ENCODE measurements at regions of chr5 and their contacts with region 1.

Region 1: GRCh38 chr5:76384189-76384588 is 18.9 kb upstream of the IQGAP2 start:
- DNase-seq: no peak
- H3K4me3 Mint-ChIP-seq: no peak overlapping the region
- H3K27ac Mint-ChIP-seq: no peak overlapping the region
- H3K4me1 Mint-ChIP-seq: peaks cover 32% of the 10 kb centered on the region
- H3K27me3 Mint-ChIP-seq: no peaks in the 10 kb centered on the region

Region 2: GRCh38 chr5:76303921-76304320 is 80.3 kb before region 1 on chr5:
- CTCF ChIA-PET with region 1: no interaction called
- POLR2A ChIA-PET with region 1: no interaction called
- intact Hi-C with region 1: no loop called
- DNase-seq: peak; percentile 73
- H3K4me3 Mint-ChIP-seq: no peak overlapping the region
- H3K27ac Mint-ChIP-seq: no peak overlapping the region
- H3K4me1 Mint-ChIP-seq: peaks cover 30% of the 10 kb centered on the region
- H3K27me3 Mint-ChIP-seq: no peaks in the 10 kb centered on the region

Region 3: GRCh38 chr5:76345582-76345981 is 38.6 kb before region 1 on chr5:
- CTCF ChIA-PET with region 1: no interaction called
- POLR2A ChIA-PET with region 1: no interaction called
- intact Hi-C with region 1: loop called (anchors 5 kb)
- DNase-seq: no peak
- H3K4me3 Mint-ChIP-seq: no peak overlapping the region
- H3K27ac Mint-ChIP-seq: no peak overlapping the region
- H3K4me1 Mint-ChIP-seq: peaks cover 11% of the 10 kb centered on the region
- H3K27me3 Mint-ChIP-seq: no peaks in the 10 kb centered on the region

Measured in activated CD4-positive, alpha-beta memory T cell treated with anti-CD3 and anti-CD28 coated beads for 36 hours (primary cell).